Activated CD4-positive, alpha-beta memory T cell treated with anti-CD3 and anti-CD28 coated beads for 36 hours (primary cell): ENCODE measurements at regions of chr14 and their contacts with region 1.

Region 1: DNA sequence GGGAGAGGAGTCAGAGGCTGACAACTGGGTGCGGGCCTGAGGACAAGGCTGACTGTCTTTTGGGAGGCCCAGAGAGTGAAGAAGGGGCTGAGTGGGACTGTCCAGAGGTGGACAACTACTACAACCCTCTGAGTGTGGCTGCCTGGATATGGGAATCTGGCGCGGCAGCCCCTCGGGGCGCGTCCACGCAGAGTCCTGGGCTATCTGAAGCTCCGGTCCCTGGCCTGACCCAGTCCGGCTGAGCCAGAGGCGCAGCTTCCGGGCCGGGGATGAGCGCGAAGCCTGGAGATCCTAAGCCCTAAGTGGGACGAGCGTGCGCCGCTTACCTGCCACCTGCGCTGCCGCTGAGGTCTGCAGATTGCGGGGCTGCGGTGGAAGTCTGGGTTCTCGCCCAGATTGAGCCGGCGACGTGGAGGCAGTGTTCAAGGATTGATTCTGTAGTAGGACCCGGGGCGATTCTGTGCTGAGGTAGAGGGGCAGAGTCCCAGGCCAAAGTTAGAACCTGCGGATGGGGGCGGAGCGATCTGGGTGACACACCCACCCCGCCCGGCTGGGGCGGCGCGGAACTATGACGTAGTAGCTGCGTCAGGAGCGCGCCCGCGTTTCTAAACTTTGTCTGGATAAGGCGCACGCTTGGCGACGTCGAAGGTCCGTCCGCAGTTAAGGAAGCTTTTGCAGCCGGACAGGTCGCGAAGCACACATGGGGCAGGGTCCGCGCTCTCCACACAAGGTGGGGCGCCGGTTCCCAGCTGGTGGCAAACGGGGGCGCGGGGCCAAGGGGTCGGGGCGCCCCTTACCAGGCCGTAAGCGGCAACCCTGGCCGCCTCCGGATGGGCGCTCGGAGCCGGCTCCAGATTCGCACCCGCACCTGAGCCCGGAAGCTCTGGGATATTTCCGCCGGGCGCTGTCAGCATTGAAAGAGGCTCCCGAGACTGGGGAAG is at the starts of genes DHRS1 and NOP9:
- DNase-seq: peak; percentile 96
- H3K4me3 Mint-ChIP-seq: peak within 1 kb of the TSS; percentile 90
- H3K27ac Mint-ChIP-seq: peak within 1 kb of the TSS; percentile 84
- H3K4me1 Mint-ChIP-seq: peaks cover 50% of the 10 kb centered on the region
- H3K27me3 Mint-ChIP-seq: no peaks in the 10 kb centered on the region
- total RNA-seq, gene DHRS1: 14.7 to 14.9 TPM
- total RNA-seq, gene NOP9: 30.7 to 30.9 TPM

Region 2: DNA sequence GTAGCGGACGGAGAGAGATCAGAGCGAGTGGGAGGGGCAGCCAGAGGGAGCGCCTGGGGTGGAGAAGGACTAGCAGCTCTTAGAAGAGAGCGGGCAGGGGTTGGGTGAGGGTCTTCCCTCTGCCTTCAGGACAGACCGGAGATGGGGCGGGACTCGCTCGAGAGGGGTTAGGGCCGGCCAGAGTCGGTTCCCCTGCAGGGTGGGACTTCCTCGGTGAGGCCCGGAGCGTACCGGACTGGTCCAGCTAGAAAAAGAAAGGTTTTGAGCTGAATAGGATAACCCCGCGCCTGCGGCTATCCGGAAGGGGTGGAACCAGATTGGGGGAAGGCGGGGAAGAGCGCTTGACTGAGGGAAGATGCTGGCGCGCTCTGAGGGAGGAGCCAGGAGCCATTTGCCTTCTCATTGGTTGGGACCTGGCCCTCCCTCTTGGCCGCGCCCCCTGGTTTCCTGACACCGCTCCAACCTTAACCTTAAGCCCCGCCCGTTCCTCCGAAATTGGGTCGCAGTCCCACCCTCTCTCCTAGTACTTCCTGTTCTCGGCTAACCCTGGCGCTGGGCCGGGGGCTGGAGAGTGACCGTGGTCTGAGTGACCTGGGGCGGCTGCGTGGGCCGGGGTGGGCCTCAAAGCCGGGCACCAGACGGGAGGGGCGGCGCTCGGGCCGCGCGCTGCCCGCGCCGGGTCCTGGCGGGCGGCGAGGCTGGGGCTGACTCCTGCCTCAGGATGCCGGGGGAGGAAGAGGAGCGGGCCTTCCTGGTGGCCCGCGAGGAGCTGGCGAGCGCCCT is 152.4 kb before region 1 on chr14 and contains the start of gene RNF31:
- CTCF ChIA-PET with region 1: interaction called, 3 read pairs
- POLR2A ChIA-PET with region 1: no interaction called
- intact Hi-C with region 1: loop called (anchors 5 kb)
- DNase-seq: peak; percentile 99
- H3K4me3 Mint-ChIP-seq: peak within 1 kb of the TSS; percentile 100
- H3K27ac Mint-ChIP-seq: peak within 1 kb of the TSS; percentile 99
- H3K4me1 Mint-ChIP-seq: peaks cover 56% of the 10 kb centered on the region
- H3K27me3 Mint-ChIP-seq: no peaks in the 10 kb centered on the region
- total RNA-seq, gene RNF31: 75.5 to 80.4 TPM

Region 3: GRCh38 chr14:24195191-24196070 is 104.1 kb before region 1 on chr14 and contains the start of gene TM9SF1:
- CTCF ChIA-PET with region 1: interaction called, 7 read pairs
- POLR2A ChIA-PET with region 1: interaction called, 10 read pairs
- intact Hi-C with region 1: loop called (anchors 2 kb)
- DNase-seq: peak; percentile 91
- H3K4me3 Mint-ChIP-seq: peak within 1 kb of the TSS; percentile 96
- H3K27ac Mint-ChIP-seq: peak within 1 kb of the TSS; percentile 95
- H3K4me1 Mint-ChIP-seq: peaks cover 55% of the 10 kb centered on the region
- H3K27me3 Mint-ChIP-seq: no peaks in the 10 kb centered on the region
- total RNA-seq, gene TM9SF1: 23.7 to 26.7 TPM

Region 4: GRCh38 chr14:24251880-24252288 is 47.6 kb before region 1 on chr14:
- CTCF ChIA-PET with region 1: interaction called, 81 read pairs
- POLR2A ChIA-PET with region 1: interaction called, 5 read pairs
- intact Hi-C with region 1: no loop called
- DNase-seq: no peak
- H3K4me3 Mint-ChIP-seq: no peak overlapping the region
- H3K27ac Mint-ChIP-seq: no peak overlapping the region
- H3K4me1 Mint-ChIP-seq: peaks cover 28% of the 10 kb centered on the region
- H3K27me3 Mint-ChIP-seq: no peaks in the 10 kb centered on the region

Region 5: DNA sequence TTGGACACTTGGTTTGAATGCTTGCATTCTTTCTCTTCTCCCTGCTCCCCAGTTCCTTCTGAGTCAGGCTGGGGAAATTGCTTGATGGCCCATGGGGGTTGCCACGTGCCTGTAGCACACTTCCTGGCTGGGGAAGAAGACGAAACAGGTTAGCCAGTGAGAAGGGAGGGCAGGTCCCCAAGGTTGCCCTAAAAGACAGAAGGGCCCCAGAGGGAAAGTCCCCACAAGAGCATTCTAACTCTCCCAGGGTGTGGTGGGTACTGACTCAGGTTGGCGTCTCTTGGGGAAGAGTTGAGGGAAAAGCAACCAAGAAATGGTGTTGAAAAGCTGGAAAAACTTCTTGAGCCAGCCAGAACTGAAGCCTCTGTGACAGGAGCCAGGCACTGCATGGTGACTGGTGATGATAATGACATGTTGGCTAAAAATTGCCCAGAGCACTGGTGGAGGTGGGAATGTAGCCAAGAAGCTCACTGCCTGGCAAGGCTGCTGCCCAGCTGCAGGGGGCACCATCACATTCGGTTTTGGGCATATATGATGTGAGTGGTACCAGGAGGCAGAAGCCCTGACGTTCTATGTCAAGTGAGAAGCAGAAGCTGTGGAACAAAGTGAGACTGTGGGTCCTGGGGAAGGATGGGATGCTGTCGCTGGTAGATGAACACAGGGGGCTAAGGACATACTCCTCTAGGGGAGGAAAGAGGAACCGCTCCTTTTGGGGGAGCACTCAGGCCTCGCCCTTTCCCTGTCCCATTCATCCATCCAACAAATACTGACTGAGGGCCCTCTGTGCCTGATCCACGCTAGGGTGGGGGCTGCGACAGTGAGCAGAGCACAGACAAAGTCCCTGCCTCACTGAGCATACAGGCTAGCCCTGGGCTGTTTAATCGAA is 20.0 kb before region 1 on chr14:
- CTCF ChIA-PET with region 1: interaction called, 66 read pairs
- POLR2A ChIA-PET with region 1: interaction called, 10 read pairs
- intact Hi-C with region 1: loop called (anchors 1 kb)
- DNase-seq: peak; percentile 77
- H3K4me3 Mint-ChIP-seq: no peak overlapping the region
- H3K27ac Mint-ChIP-seq: peak overlapping the region; percentile 70
- H3K4me1 Mint-ChIP-seq: peaks cover 46% of the 10 kb centered on the region
- H3K27me3 Mint-ChIP-seq: no peaks in the 10 kb centered on the region

Region 6: GRCh38 chr14:24403294-24403998 is 103.9 kb after region 1 on chr14:
- CTCF ChIA-PET with region 1: no interaction called
- POLR2A ChIA-PET with region 1: no interaction called
- intact Hi-C with region 1: no loop called
- DNase-seq: no peak
- H3K4me3 Mint-ChIP-seq: no peak overlapping the region
- H3K27ac Mint-ChIP-seq: no peak overlapping the region
- H3K4me1 Mint-ChIP-seq: peaks cover 7% of the 10 kb centered on the region
- H3K27me3 Mint-ChIP-seq: peaks cover 14% of the 10 kb centered on the region

Region 7: GRCh38 chr14:24431569-24432258 is 132.2 kb after region 1 on chr14:
- CTCF ChIA-PET with region 1: interaction called, 15 read pairs
- POLR2A ChIA-PET with region 1: interaction called, 9 read pairs
- intact Hi-C with region 1: no loop called
- DNase-seq: peak; percentile 94
- H3K4me3 Mint-ChIP-seq: peak overlapping the region; percentile 91
- H3K27ac Mint-ChIP-seq: peak overlapping the region; percentile 98
- H3K4me1 Mint-ChIP-seq: peaks cover 41% of the 10 kb centered on the region
- H3K27me3 Mint-ChIP-seq: no peaks in the 10 kb centered on the region

Region 8: GRCh38 chr14:24705840-24706239 is 406.3 kb after region 1 on chr14:
- CTCF ChIA-PET with region 1: no interaction called
- POLR2A ChIA-PET with region 1: no interaction called
- intact Hi-C with region 1: no loop called
- DNase-seq: no peak
- H3K4me3 Mint-ChIP-seq: no peak overlapping the region
- H3K27ac Mint-ChIP-seq: no peak overlapping the region
- H3K4me1 Mint-ChIP-seq: no peaks in the 10 kb centered on the region
- H3K27me3 Mint-ChIP-seq: peaks cover 4% of the 10 kb centered on the region